GM13977 (cell line): ENCODE measurements at regions of chr4 and their contacts with region 1.

Region 1: GRCh38 chr4:104860238-104861123 is 286.2 kb upstream of the TET2 start:
- DNase-seq: peak; percentile 68
- CTCF ChIP-seq: peak; percentile 81

Region 2: DNA sequence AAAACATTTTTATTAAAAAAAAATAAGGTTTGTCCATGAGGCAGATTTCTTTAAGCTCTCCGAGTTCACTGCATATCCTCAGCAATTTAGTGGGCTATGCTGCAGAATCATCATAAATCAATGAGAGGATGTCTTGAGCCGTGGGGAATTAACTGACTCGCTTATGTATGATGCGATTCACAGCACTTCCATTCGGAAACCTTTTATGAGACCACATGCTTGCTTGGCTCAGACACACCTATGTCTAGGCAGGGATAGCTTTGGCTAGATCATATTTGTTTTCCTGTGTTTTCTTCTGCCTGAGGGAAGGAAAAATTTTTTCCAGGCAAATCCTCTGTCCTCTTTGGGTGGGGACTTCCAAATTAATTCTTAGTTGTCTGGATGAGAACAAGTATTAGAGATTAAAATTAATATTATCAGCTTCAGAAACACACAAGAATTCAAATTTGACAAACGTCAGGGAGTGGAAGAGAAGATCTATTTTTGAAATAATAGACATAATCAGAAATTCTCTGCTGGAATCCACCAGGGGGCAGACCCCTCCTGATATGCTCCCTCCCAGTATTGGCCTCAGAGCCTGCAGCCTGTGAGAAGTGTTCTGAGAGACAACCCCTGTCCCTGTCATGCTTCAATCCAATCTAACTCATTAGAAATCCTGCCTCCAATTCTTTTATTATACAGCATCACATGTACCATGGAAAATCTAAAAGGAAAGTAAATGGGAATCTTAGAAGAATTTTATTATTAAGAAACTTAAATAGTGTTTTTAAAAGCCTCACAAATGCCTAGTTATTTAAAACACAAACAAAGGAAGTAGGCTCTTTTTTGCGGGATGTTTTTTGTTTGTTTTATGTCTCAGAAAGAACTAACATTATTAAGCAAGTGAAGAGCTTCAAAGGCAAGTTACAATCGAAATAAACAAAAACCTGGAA is 795.6 kb before region 1 on chr4:
- in situ Hi-C with region 1: loop called (anchors 10 kb)
- DNase-seq: peak; percentile 13
- CTCF ChIP-seq: peak; percentile 60

Region 3: DNA sequence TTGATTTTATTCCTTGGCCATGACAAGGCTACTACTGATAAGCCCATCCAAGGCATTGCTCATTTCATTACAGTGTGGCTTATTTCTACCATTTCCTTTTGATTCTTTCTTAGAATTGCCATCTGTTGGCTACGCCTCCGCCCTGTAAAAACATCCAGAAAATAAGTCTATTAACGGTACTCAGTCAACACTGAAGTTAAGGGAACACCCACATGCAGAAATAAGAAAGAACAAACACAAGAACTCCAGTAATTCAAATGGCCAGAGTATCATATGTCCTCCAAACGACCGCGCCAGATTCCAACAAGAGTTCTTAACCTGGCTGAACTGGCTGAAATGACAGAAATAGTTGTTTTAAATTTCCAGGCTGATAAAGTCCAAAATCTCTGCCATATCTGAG is 456.1 kb before region 1 on chr4:
- in situ Hi-C with region 1: no loop called
- DNase-seq: no peak
- CTCF ChIP-seq: no peak

Region 4: GRCh38 chr4:104559502-104559901 is 301.0 kb before region 1 on chr4:
- in situ Hi-C with region 1: no loop called
- DNase-seq: no peak
- CTCF ChIP-seq: no peak

Region 5: GRCh38 chr4:105059337-105059736 is 198.9 kb after region 1 on chr4:
- in situ Hi-C with region 1: loop called (anchors 10 kb)
- DNase-seq: peak; percentile 34
- CTCF ChIP-seq: no peak

Region 6: DNA sequence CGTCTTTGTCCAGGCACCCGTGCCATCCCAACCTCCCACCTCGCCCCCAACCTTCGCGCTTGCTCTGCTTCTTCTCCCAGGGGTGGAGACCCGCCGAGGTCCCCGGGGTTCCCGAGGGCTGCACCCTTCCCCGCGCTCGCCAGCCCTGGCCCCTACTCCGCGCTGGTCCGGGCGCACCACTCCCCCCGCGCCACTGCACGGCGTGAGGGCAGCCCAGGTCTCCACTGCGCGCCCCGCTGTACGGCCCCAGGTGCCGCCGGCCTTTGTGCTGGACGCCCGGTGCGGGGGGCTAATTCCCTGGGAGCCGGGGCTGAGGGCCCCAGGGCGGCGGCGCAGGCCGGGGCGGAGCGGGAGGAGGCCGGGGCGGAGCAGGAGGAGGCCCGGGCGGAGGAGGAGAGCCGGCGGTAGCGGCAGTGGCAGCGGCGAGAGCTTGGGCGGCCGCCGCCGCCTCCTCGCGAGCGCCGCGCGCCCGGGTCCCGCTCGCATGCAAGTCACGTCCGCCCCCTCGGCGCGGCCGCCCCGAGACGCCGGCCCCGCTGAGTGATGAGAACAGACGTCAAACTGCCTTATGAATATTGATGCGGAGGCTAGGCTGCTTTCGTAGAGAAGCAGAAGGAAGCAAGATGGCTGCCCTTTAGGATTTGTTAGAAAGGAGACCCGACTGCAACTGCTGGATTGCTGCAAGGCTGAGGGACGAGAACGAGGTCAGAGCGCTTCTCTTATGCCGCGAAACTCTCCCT is 286.0 kb after region 1 on chr4 and contains the start of gene TET2:
- in situ Hi-C with region 1: no loop called
- DNase-seq: peak; percentile 87
- CTCF ChIP-seq: no peak

Region 7: GRCh38 chr4:105805501-105806120 is 945.1 kb after region 1 on chr4:
- in situ Hi-C with region 1: no loop called
- DNase-seq: no peak
- CTCF ChIP-seq: no peak